ENCODE measurements at regions of chr12 and their contacts with region 1.

Region 1: DNA sequence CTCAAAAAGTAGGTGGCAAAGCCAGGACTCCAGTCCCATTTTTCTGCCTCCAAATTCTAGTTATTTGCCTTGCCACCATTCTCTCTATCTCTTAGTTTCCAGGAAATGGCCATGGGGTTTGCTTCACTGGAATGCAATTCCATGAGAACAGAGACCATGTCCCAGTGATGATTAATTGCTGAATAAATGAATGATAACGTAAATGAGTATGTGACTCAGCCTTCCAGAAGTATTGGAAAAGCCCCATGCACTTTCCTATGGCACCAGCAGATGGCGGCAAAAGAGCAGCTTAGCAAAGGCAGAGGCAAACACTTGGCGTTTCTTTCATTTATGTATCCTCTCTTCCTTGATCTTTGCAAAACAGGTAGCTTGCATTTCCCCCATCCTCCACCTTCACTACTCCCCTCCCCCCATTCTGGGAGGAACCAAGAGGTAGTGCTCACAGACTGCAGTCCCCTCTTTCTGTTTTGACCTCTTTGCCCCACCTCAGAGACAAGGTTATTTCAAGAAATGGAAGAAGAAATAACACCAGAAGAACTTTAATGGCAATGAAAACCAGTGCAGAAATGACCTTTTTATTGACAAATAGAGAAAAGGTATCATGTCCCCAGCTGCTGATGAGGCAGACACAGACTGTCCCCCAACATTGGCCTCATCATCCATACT is 21.3 kb downstream of the TBX3 start:
- DNase-seq: peak; percentile 72 to 73
- ATAC-seq: peak in 3 of 8 donors; percentile 46 to 50 (median 49)
- H3K4me3 ChIP-seq: no peak overlapping the region
- H3K27ac ChIP-seq: no peak overlapping the region
- H3K4me1 ChIP-seq: peaks cover 0 to 19% (median 13%) of the 10 kb centered on the region in 9 donors
- H3K27me3 ChIP-seq: peaks cover 6 to 78% (median 61%) of the 10 kb centered on the region in 7 donors
- CTCF ChIP-seq: peak in 8 of 9 donors; percentile 87 to 99 (median 96)

Region 2: DNA sequence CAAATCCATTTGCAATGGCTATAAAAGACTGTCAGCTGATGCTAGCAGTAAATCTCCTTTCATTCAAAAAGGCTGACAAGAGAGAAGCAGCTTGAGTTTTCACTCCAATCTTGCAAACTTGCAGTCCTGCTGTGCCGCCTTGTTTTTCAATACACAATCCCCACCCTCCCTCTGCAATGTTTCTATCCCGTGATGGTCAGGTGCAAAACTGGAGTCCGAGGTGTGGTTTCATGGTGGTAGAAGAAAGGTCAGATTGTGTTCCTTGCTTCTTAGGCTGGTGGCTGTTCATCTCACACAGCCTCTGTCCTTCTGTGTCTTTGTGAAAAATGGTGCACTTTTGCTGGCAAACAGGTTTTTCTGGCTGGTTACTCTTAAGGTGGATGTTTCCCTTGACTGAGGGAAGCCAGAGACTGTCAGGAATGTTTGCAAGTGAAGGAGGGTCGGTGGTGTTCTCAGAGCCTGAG is 49.1 kb after region 1 on chr12:
- intact Hi-C with region 1: no loop called
- DNase-seq: no peak
- ATAC-seq: no peak
- H3K4me3 ChIP-seq: no peak overlapping the region
- H3K27ac ChIP-seq: no peak overlapping the region
- H3K4me1 ChIP-seq: no peaks in the 10 kb centered on the region
- H3K27me3 ChIP-seq: peaks cover 0 to 75% (median 55%) of the 10 kb centered on the region in 7 donors
- CTCF ChIP-seq: no peak

Region 3: DNA sequence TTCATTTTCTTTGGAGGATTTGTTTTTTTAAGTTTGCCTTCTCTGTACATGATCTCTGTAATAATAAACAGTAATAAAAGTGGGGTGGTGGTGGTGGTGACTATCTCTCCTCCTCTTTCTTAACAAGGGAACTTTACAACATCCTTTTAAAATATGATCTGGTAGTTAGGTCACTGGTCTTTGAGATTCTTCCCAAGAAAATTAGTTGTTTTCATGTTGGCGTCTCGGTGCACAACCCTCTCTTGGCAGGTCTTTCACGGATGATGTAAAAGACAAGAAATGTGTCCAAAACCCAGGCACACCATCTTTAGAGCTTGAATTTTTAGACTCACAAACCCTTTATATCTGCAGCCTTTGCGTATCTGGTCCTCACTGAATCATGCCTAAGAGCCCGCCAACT is 509.9 kb after region 1 on chr12:
- intact Hi-C with region 1: loop called in 5 of 10 experiments (anchors 5 to 10 kb)
- DNase-seq: no peak
- ATAC-seq: no peak
- H3K4me3 ChIP-seq: no peak overlapping the region
- H3K27ac ChIP-seq: no peak overlapping the region
- H3K4me1 ChIP-seq: no peaks in the 10 kb centered on the region
- H3K27me3 ChIP-seq: peaks cover 0 to 2% (median 0%) of the 10 kb centered on the region in 7 donors
- CTCF ChIP-seq: no peak

Measured in heart right ventricle (tissue), 16 donors.